ENCODE measurements at regions of chr5 and their contacts with region 1.

Region 1: DNA sequence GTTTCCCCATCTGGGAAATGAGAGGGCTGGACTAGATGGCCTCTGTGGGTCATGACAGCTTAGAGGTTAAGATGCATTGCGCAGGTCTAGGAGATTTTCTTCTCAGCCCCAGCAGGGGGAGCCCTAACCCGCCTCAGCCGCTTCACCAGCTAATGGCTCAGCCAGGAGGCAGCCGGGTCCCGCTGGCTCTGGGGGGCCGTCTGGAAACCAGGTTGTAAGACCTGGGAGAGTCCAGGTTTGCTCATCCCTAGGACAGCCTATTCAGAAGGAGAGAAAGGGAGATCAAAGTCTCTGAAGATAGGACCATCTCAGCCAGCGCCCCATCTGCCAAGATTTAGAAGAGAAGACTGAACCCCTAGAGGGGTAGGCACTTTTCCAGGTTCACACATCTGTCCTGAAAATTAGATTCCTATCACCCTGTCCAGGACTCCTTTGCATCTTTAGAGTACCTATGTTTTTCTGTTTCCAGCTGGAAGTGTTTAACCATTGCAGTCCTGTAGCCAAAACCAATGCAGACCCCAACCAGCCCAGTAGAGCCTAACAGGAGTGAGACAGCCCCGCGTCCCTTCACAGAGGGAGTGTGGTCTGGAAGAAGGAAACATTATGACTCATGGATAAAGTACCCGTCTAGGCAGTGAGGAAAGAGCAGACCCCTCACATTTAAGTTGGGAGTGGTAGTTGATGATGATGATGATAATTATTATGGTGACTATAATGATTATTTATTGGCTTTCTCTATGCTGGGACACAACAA is 27.5 kb downstream of the SPARC start:
- DNase-seq: peak; percentile 85
- ATAC-seq: peak; percentile 98
- H3K4me3 Mint-ChIP-seq: no peak overlapping the region
- H3K27ac Mint-ChIP-seq: no peak overlapping the region
- H3K4me1 Mint-ChIP-seq: peaks cover 9% of the 10 kb centered on the region
- H3K27me3 Mint-ChIP-seq: peaks cover 22% of the 10 kb centered on the region

Region 2: DNA sequence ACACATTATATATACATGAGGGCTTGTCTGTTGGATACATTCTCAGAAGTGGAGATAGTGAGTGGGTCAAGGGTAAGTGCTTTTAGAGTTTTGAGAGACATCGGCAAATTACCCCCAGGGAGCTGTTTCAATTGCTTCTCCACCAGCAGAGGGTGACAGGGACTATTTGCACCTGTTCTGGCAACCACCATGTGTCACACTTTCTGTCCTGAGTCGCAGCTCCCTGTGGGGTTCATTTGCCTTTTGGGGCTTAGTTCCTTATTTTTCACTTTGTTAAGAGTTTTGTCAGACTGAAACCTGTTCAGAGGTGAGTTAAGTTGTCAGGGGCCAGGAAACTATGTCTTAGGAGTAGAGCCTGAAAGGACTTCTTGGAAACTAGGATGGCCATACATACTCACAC is 231.9 kb before region 1 on chr5:
- CTCF ChIA-PET with region 1: no interaction called
- POLR2A ChIA-PET with region 1: no interaction called
- DNase-seq: no peak
- ATAC-seq: no peak
- H3K4me3 Mint-ChIP-seq: no peak overlapping the region
- H3K27ac Mint-ChIP-seq: no peak overlapping the region
- H3K4me1 Mint-ChIP-seq: no peaks in the 10 kb centered on the region
- H3K27me3 Mint-ChIP-seq: peaks cover 23% of the 10 kb centered on the region

Region 3: DNA sequence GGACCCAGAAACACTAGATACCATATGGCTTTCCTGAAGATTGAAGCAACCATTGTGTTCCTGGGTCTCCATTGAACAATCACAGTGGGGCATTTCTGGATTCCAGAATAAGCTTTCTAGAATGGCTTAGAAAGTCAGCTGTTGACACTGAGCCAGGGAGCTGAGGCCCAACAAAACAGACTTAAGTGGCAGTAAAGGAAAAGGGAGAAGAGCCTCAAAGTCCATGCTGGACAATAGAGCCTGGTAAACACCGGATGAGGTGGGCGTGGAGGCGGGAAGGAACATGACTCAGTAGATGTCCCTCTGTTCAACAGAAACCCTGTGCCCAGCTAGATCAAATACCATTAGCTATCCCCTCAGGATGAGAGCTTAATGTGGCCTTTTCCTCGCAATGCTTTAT is 12.8 kb after region 1 on chr5:
- CTCF ChIA-PET with region 1: interaction called, 16 read pairs
- POLR2A ChIA-PET with region 1: no interaction called
- DNase-seq: no peak
- ATAC-seq: no peak
- H3K4me3 Mint-ChIP-seq: no peak overlapping the region
- H3K27ac Mint-ChIP-seq: no peak overlapping the region
- H3K4me1 Mint-ChIP-seq: peaks cover 4% of the 10 kb centered on the region
- H3K27me3 Mint-ChIP-seq: peaks cover 8% of the 10 kb centered on the region

Region 4: DNA sequence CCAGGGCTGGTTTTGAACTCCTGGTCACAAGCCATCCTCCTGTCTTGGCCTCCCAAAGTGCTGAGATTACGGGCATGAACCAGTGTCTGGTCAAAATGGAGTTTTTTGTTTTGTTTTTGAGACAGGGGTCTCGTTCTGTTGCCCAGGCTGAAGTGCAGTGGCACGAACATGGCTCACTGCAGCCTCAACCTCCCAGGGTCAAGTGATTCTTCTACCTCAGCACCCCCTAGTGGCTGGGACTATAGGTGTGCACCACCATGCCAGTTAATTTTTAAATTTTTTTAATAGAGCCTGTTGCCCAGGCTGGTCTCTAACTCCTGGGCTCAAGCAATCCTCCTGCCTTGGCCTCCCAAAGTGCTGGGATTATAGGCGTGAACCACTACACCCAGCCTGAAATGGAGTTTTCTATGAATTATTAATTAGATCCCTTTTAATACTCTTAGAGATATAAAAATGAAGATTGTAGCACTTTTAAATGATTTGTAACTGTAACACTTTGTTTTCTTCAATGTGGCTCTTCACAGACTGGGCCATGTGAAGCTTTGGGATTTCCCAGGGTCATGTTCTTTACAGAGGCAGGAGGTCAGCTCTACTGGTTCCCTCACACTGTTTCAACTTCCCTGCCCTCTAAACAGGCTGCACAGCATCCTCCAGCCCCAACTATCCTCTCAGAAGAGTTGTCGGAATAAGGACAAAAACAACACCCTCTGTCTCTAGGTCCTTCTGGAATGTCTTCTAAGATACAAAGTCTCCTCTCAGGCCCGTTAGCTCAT is 60.2 kb after region 1 on chr5:
- CTCF ChIA-PET with region 1: interaction called, 26 read pairs
- POLR2A ChIA-PET with region 1: no interaction called
- DNase-seq: peak; percentile 40
- ATAC-seq: peak; percentile 67
- H3K4me3 Mint-ChIP-seq: no peak overlapping the region
- H3K27ac Mint-ChIP-seq: no peak overlapping the region
- H3K4me1 Mint-ChIP-seq: no peaks in the 10 kb centered on the region
- H3K27me3 Mint-ChIP-seq: no peaks in the 10 kb centered on the region

Region 5: DNA sequence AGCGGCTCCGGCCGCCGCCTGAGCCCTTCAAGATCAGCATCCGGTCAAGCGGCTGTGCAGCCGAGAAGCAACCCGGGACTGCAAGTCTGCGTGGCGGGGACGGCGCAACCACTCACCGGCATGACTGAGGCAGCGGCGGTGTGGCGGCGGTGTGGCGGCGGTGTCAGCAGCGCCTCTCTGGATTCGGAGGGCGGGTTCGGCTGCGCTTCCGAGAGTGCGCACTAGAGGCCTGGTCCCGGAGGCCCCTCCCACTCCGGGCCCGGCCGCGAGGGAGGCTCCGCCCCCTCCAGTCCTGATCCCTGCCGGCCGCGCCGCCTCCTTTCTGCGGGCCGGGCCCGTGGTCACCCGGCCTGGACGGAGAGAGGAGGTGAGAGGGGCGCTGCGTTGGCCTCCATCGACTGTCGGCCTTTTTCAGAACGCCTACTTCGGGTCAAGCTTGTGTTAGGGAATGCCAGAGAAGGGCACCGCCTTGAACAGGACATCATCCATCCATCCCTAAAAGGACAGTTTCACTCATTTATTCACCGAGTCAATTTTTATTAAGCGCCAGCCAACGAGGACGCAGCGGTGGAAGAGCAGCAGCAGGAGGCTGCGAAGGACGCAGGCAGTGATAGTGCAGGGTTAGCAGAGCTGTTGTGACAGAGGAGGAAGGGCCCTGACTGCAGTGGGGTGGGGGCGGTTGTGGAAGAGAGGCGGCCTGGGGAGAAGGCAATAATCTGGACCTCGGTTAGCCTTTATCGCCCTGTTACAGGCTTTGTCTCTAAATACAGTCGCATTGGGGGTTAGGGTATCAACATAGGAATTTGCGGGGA is 99.5 kb after region 1 on chr5 and contains the start of gene ATOX1:
- CTCF ChIA-PET with region 1: interaction called, 24 read pairs
- POLR2A ChIA-PET with region 1: no interaction called
- DNase-seq: peak; percentile 91
- ATAC-seq: peak; percentile 99
- H3K4me3 Mint-ChIP-seq: peak within 1 kb of the TSS; percentile 89
- H3K27ac Mint-ChIP-seq: peak within 1 kb of the TSS; percentile 85
- H3K4me1 Mint-ChIP-seq: peaks cover 34% of the 10 kb centered on the region
- H3K27me3 Mint-ChIP-seq: no peaks in the 10 kb centered on the region
- total RNA-seq, gene ATOX1: 45.2 to 46.6 TPM

Region 6: DNA sequence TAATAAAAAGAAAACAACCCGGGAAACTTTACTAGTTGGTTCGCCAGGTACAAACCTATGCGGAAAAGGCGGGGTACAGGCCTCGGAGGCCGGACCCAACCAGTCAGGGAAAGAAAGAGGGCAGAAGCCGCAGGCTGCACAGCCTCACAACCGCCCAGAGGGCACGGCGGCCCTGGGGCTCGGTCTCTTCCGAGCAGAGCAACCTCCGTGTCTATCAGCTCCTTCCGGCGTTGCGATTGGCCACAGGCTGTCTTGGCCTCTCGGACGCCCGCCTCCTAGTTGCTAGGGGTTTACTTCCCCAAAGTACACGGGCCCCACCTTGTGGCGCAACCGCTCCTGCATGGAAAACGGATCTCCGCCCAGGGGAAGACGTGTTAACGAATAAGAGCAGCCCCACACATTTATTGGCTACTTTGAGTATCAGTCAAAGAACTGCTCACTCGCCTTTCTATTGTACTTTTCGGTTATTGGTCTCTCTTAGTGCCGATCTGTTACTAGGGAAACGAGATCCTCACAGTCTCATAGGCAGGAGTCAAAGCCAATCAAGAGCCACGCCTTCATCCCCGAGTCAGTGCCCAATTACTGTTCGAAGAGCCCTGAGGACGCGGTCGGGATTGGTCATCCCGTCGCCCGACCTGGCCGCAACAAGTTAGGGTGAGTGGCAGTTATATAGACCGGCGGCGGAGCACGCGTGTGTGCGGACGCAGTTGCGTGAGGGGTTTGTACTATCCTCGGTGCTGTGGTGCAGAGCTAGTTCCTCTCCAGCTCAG is 112.3 kb after region 1 on chr5 and contains the start of gene G3BP1:
- CTCF ChIA-PET with region 1: interaction called, 41 read pairs
- POLR2A ChIA-PET with region 1: interaction called, 7 read pairs
- DNase-seq: peak; percentile 100
- ATAC-seq: peak; percentile 84
- H3K4me3 Mint-ChIP-seq: peak within 1 kb of the TSS; percentile 87
- H3K27ac Mint-ChIP-seq: peak within 1 kb of the TSS; percentile 81
- H3K4me1 Mint-ChIP-seq: peaks cover 33% of the 10 kb centered on the region
- H3K27me3 Mint-ChIP-seq: no peaks in the 10 kb centered on the region
- total RNA-seq, gene G3BP1: 193 to 213 TPM

Measured in activated CD8-positive, alpha-beta T cell treated with anti-CD3 and anti-CD28 coated beads, Interleukin-2, amount 10 ng/mL, durations not matched to agents 7 days and 5 days (primary cell).